Dorsolateral prefrontal cortex (tissue), 120 donors: ENCODE measurements at regions of chr5 and their contacts with region 1.

Region 1: GRCh38 chr5:160021831-160022446 is 13.0 kb downstream of the TTC1 start:
- DNase-seq: peak in 2 of 10 donors; percentile 52 to 72
- H3K4me3 ChIP-seq: peak overlapping the region in 5 of 59 donors; percentile 19 to 39 (median 28)
- H3K27ac ChIP-seq: peak overlapping the region in 4 of 59 donors; percentile 11 to 51 (median 32)
- H3K27me3 ChIP-seq: no peaks in the 10 kb centered on the region
- CTCF ChIP-seq: peak; percentile 75 to 98 (median 89)

Region 2: DNA sequence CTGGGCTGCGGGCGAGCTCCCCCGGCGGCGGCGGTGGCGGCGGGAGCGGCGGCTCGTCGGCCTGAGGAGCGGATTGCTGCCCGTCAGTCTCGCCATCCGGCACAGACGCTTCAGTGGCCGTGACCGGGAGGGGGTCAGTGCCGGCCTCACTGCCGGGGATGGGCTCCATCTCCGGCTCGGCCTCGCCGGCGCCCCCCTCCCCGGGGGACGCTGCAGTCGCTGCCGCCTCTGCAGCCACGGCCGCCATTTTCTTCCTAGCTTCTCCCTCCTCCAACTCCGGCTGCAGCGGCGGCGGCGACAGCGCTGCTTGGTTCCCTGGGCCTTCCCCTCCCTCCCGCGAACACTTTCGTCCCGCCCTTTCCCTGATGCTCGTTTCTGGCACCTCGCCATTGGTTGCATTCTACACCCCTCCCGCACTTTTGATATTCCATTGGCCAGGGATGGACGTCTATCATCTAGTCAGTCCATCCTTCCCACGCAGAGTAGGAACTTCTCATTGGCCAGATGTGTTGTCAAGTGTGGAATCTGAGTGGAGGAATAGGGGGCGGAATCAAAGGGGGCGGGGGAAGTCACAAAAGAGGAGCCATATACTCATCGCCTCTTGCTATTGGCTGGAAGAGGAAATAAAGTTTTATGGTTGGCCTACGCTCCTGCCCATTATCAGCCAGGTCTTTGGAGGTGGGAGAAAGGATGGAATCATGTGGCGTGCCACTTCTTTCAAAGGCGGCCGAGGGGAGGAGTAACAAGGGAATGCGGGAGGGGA is 97.4 kb after region 1 on chr5 and contains the start of gene PWWP2A:
- intact Hi-C with region 1: loop called in 1 of 2 experiments (anchors 5 kb)
- DNase-seq: peak; percentile 95 to 100 (median 99)
- H3K4me3 ChIP-seq: peak within 1 kb of the TSS; percentile 55 to 99 (median 95)
- H3K27ac ChIP-seq: peak within 1 kb of the TSS; percentile 90 to 100 (median 99)
- H3K27me3 ChIP-seq: no peaks in the 10 kb centered on the region
- CTCF ChIP-seq: peak in 27 of 56 donors; percentile 3 to 44 (median 19)
- total RNA-seq, gene PWWP2A: 24.0 to 72.7 (median 40.0) TPM

Region 3: DNA sequence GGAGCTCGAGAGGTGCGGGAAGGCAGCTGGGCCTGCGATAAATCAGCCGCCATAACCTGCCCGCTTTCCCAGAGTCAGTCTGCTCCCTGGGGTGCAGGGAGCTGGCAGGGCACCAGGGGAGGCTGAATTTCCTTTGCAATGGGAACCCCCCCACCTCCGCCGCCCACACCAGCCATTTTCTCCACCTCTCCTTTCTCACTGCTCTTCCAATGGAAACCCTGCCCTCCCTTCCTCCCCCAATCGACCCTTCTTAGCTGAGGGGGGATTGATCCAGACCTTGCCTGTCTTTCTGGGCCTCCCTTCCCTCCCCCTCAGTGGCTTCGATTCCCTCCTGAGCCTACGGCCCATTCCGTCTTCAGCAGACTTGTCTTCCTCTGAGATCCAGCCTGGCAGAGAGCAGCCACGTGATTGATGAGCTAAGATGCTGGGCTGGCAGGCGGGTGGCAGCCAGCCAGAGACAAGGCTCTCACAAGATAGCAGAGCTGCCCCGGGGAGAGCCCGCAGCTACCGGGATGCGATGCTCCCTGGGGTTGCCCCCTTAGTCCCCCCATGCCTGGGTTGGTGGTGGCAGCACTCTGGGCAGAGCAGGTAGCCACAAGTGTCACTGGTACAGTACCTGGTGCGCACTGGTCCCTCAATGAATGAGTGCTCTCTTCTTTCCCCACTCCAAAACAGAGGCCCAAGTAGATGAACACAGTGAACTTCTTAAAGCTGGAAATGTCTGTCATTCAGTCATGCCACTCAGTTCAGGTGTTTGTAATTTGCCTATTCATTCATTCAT is 153.7 kb after region 1 on chr5:
- intact Hi-C with region 1: no loop called
- DNase-seq: peak; percentile 77 to 90 (median 88)
- H3K4me3 ChIP-seq: peak overlapping the region; percentile 16 to 65 (median 42)
- H3K27ac ChIP-seq: peak overlapping the region in 57 of 59 donors; percentile 4 to 90 (median 76)
- H3K27me3 ChIP-seq: no peaks in the 10 kb centered on the region
- CTCF ChIP-seq: peak in 3 of 56 donors; percentile 4 to 34 (median 16)

Region 4: DNA sequence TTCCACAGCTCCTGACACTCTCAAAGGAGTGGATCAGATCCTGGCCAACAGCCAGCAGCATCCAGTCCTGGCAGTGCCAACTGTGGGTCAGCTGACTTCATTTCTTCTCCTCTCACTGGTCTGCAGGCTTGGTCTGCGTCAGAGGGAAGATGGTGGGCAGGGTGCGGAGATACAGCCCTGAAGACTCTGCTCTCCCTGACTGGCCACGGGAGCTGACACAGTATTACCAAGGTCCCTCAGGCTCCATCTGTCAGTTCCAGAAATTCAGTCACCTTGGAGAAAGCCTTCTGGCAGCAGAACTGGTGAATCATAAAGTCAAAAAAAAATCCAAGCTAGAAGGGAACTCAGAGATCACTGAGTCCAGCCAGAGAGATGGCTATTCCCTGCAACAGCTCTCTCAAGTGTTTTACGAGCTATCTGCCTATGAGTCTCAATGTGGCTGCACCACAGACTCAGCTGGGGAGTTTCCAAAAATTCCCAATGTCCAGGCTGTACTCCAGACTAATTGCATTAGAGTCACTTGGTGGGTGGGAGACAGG is 320.5 kb after region 1 on chr5:
- intact Hi-C with region 1: loop called (anchors 2 to 5 kb)
- DNase-seq: peak in 1 of 10 donors; percentile 60
- H3K4me3 ChIP-seq: no peak overlapping the region
- H3K27ac ChIP-seq: peak overlapping the region in 1 of 59 donors; percentile 85
- H3K27me3 ChIP-seq: no peaks in the 10 kb centered on the region
- CTCF ChIP-seq: no peak

Region 5: GRCh38 chr5:160390787-160391696 is 369.1 kb after region 1 on chr5:
- intact Hi-C with region 1: loop called in 1 of 2 experiments (anchors 2 kb)
- DNase-seq: no peak
- H3K4me3 ChIP-seq: no peak overlapping the region
- H3K27ac ChIP-seq: no peak overlapping the region
- H3K27me3 ChIP-seq: no peaks in the 10 kb centered on the region
- CTCF ChIP-seq: peak in 55 of 56 donors; percentile 21 to 77 (median 57)